Heart right ventricle (tissue), 16 donors: ENCODE measurements at regions of chrX and their contacts with region 1.

Region 1: GRCh38 chrX:13646154-13646549 is 6.8 kb upstream of the TCEANC start:
- DNase-seq: peak; percentile 41 to 55
- ATAC-seq: peak in 7 of 8 donors; percentile 61 to 81 (median 76)
- H3K4me3 ChIP-seq: no peak overlapping the region
- H3K27ac ChIP-seq: no peak overlapping the region
- H3K4me1 ChIP-seq: peaks cover 0 to 21% (median 0%) of the 10 kb centered on the region in 9 donors
- H3K27me3 ChIP-seq: peaks cover 0 to 68% (median 0%) of the 10 kb centered on the region in 7 donors
- CTCF ChIP-seq: peak; percentile 23 to 74 (median 62)

Region 2: GRCh38 chrX:12946838-12947544 is 699.2 kb before region 1 on chrX:
- intact Hi-C with region 1: loop called in 2 of 10 experiments (anchors 5 kb)
- DNase-seq: peak in 1 of 2 donors; percentile 69
- ATAC-seq: peak; percentile 49 to 86 (median 74)
- H3K4me3 ChIP-seq: no peak overlapping the region
- H3K27ac ChIP-seq: peak overlapping the region in 8 of 10 donors; percentile 15 to 83 (median 64)
- H3K4me1 ChIP-seq: peaks cover 0 to 56% (median 12%) of the 10 kb centered on the region in 9 donors
- H3K27me3 ChIP-seq: peaks cover 0 to 25% (median 0%) of the 10 kb centered on the region in 7 donors
- CTCF ChIP-seq: peak; percentile 64 to 97 (median 84)

Region 3: DNA sequence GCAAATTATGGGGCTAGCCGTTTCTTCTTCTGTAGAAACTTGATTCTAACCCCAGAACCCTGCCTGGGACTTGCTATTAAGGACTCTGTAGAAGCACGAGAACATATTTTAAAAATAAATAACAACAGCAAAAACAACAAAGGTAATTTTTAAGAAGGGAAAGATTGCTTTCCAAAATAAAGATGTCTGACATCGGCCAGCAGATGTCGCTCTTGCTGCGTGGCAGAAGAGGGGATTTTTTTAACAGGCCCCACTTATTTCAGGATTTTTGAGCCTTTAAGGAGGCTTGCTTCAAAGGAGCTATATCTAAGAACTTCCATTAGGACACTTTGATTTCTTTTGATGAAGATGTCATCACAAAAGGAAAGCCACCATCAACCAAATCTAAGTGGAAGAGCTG is 139.6 kb before region 1 on chrX:
- intact Hi-C with region 1: loop called (anchors 1 to 10 kb)
- DNase-seq: peak; percentile 18
- ATAC-seq: no peak
- H3K4me3 ChIP-seq: no peak overlapping the region
- H3K27ac ChIP-seq: no peak overlapping the region
- H3K4me1 ChIP-seq: peaks cover 0 to 4% (median 0%) of the 10 kb centered on the region in 9 donors
- H3K27me3 ChIP-seq: peaks cover 0 to 38% (median 0%) of the 10 kb centered on the region in 7 donors
- CTCF ChIP-seq: peak; percentile 54 to 84 (median 71)

Region 4: DNA sequence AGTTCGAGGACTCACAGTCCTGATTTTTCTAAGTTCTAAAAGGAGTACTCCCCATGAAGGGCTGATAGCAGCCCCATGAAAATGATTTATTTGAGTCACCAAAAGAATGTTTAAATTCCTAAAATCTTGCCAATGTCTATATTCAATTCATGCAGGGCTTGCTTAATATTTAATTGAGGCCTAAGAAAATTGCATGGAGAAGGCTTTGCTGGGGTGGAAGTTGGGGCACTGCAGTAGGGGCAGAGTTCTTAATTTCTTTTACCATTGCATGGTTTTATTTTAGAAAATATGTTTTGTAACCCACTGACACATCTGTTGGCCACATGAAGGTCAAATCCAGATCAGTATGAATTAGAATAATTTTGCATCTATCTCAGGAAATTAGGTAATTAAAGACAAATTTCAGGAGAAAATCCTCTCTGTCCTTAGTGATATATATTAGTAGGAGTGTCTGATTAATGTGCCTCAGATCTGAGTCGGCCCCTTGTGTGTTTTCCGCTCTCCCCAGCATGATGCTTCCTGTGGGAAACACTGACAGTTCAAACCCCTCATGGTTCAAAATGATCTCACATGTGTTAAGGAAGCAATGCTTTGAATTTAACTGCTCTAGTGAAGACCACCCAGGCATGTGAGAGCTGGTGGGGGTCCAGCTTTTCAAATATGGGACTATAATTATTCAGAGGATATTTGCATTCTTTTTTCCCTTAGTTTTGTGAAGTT is 130.8 kb before region 1 on chrX:
- intact Hi-C with region 1: loop called in 1 of 10 experiments (anchors 10 kb)
- DNase-seq: no peak
- ATAC-seq: no peak
- H3K4me3 ChIP-seq: no peak overlapping the region
- H3K27ac ChIP-seq: no peak overlapping the region
- H3K4me1 ChIP-seq: no peaks in the 10 kb centered on the region
- H3K27me3 ChIP-seq: peaks cover 0 to 31% (median 0%) of the 10 kb centered on the region in 7 donors
- CTCF ChIP-seq: no peak